ENCODE measurements at regions of chr1 and their contacts with region 1.

Region 1: GRCh38 chr1:21200767-21201166 is 24.1 kb upstream of the EIF4G3 start:
- DNase-seq: no peak
- ATAC-seq: no peak
- H3K4me3 Mint-ChIP-seq: no peak overlapping the region
- H3K27ac Mint-ChIP-seq: no peak overlapping the region
- H3K4me1 Mint-ChIP-seq: no peaks in the 10 kb centered on the region
- H3K27me3 Mint-ChIP-seq: peaks cover 3% of the 10 kb centered on the region

Region 2: DNA sequence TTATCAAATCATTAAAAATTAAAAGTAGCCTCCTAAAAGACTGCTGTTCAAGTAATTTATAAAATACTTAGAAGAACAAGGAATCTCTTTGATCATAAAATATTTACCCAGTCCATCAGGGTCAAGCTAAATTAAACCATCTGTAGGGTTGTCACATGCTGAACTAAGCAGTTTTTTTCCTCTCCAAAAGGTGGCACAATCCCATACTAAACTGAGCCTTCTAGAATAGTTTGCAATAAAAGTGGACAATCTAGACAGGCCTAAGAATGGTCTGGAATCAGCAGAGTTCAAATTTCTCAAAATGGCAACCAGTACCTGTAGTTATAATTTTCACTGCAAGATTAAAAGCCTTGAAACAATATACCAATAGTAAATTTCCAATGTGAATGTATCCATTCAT is 218.9 kb before region 1 on chr1:
- CTCF ChIA-PET with region 1: interaction called, 43 read pairs
- DNase-seq: no peak
- ATAC-seq: no peak
- H3K4me3 Mint-ChIP-seq: no peak overlapping the region
- H3K27ac Mint-ChIP-seq: no peak overlapping the region
- H3K4me1 Mint-ChIP-seq: peaks cover 2% of the 10 kb centered on the region
- H3K27me3 Mint-ChIP-seq: no peaks in the 10 kb centered on the region

Region 3: GRCh38 chr1:21184276-21184675 is 16.5 kb before region 1 on chr1:
- CTCF ChIA-PET with region 1: interaction called, 23 read pairs
- DNase-seq: no peak
- ATAC-seq: no peak
- H3K4me3 Mint-ChIP-seq: no peak overlapping the region
- H3K27ac Mint-ChIP-seq: no peak overlapping the region
- H3K4me1 Mint-ChIP-seq: no peaks in the 10 kb centered on the region
- H3K27me3 Mint-ChIP-seq: peaks cover 5% of the 10 kb centered on the region

Region 4: GRCh38 chr1:21216835-21217811 is 16.4 kb after region 1 on chr1:
- CTCF ChIA-PET with region 1: interaction called, 14 read pairs
- DNase-seq: peak; percentile 78
- ATAC-seq: peak; percentile 59
- H3K4me3 Mint-ChIP-seq: no peak overlapping the region
- H3K27ac Mint-ChIP-seq: no peak overlapping the region
- H3K4me1 Mint-ChIP-seq: no peaks in the 10 kb centered on the region
- H3K27me3 Mint-ChIP-seq: no peaks in the 10 kb centered on the region

Measured in activated CD8-positive, alpha-beta memory T cell treated with anti-CD3 and anti-CD28 coated beads, Interleukin-2, amount 10 ng/mL, durations not matched to agents 7 days and 5 days (primary cell).